Psoas muscle (tissue), 8 donors: ENCODE measurements at regions of chr3 and their contacts with region 1.

Region 1: DNA sequence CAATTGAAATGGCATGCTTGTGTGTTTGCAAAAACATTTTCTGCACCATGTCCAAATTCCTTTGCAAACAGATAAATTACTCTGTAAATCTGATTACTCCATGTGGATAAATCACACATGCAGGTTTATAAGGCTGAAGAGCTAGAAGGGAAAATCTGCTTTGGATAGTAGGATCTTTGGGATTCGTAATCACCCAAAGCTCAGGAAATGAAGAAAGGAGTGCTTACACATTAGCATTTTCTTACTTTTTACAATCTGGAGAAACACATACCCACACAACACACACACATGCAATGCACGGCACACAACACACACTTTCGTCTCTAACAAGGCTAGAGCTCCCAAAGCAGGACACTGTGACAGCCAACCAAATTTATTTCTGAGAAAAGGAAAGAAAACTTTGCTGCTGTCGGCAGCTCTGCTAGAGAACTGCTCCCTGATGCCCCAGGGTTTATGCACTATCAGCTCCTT is 2.1 kb downstream of the LSAMP start:
- DNase-seq: no peak
- ATAC-seq: no peak
- H3K4me3 ChIP-seq: no peak overlapping the region
- H3K27ac ChIP-seq: no peak overlapping the region
- H3K4me1 ChIP-seq: no peaks in the 10 kb centered on the region
- H3K27me3 ChIP-seq: peaks cover 0 to 16% (median 4%) of the 10 kb centered on the region in 3 donors
- CTCF ChIP-seq: no peak

Region 2: DNA sequence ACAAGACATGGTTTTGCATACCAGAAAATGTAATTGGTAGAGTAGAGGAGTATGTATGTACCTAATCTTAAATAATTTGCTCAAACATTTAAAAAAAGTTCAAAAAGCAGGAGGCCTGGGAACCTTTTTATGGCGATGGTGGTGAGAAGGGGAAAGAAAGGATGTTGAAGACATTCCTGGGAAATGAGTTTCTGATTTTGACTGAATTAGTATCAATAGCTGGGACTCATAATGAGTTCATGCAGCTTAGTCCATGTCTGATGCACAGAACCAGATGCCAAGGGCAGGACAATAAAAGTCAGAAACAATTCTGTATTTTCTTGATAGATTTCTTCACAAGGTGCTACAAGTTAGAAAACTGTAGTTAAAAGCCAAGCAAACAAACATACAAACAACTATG is 424.6 kb before region 1 on chr3:
- intact Hi-C with region 1: no loop called
- DNase-seq: no peak
- ATAC-seq: no peak
- H3K4me3 ChIP-seq: no peak overlapping the region
- H3K27ac ChIP-seq: no peak overlapping the region
- H3K4me1 ChIP-seq: no peaks in the 10 kb centered on the region
- H3K27me3 ChIP-seq: no peaks in the 10 kb centered on the region
- CTCF ChIP-seq: no peak

Region 3: DNA sequence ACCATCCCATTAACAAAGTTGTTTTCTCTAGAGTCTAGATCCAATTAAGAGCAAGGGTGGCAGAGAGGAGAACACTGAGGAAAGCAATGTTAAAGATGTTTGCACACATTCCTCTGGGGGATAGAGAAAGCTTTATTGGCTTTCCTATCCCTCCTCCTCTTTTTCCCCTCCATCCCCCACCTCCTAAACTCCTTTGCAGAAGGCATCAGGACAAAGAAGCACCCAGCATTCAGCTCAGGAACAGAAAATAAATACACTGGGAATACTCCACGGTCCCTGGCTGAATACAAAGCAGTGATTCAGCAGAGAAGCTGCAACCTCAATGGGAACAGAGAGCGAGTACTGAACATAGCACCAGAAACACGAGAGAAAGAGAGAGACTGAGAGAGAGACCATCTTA is 19.9 kb before region 1 on chr3:
- intact Hi-C with region 1: loop called in 1 of 2 experiments (anchors 2 kb)
- DNase-seq: no peak
- ATAC-seq: no peak
- H3K4me3 ChIP-seq: no peak overlapping the region
- H3K27ac ChIP-seq: no peak overlapping the region
- H3K4me1 ChIP-seq: no peaks in the 10 kb centered on the region
- H3K27me3 ChIP-seq: no peaks in the 10 kb centered on the region
- CTCF ChIP-seq: no peak

Region 4: DNA sequence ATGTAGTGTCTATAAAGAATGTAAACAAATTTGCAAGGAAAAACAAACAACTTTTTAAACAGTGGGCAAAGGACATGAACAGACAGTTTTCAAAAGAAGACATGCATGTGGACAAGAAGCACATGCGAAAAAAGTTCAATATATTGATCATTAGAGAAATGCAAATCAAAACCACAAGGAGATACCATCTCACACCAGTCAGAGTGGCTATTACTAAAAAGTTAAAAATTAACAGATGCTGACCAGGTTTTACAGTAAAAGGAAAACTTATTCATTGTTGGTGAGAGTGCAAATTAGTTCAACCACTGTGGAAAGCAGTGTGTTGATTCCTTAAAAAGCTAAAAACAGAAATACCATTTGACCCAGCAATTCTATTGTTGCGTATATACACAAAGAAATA is 49.2 kb after region 1 on chr3:
- intact Hi-C with region 1: no loop called
- DNase-seq: no peak
- ATAC-seq: no peak
- H3K4me3 ChIP-seq: no peak overlapping the region
- H3K27ac ChIP-seq: no peak overlapping the region
- H3K4me1 ChIP-seq: no peaks in the 10 kb centered on the region
- H3K27me3 ChIP-seq: no peaks in the 10 kb centered on the region
- CTCF ChIP-seq: no peak